Activated CD8-positive, alpha-beta T cell treated with anti-CD3 and anti-CD28 coated beads for 36 hours (primary cell): ENCODE measurements at regions of chr18 and their contacts with region 1.

Region 1: DNA sequence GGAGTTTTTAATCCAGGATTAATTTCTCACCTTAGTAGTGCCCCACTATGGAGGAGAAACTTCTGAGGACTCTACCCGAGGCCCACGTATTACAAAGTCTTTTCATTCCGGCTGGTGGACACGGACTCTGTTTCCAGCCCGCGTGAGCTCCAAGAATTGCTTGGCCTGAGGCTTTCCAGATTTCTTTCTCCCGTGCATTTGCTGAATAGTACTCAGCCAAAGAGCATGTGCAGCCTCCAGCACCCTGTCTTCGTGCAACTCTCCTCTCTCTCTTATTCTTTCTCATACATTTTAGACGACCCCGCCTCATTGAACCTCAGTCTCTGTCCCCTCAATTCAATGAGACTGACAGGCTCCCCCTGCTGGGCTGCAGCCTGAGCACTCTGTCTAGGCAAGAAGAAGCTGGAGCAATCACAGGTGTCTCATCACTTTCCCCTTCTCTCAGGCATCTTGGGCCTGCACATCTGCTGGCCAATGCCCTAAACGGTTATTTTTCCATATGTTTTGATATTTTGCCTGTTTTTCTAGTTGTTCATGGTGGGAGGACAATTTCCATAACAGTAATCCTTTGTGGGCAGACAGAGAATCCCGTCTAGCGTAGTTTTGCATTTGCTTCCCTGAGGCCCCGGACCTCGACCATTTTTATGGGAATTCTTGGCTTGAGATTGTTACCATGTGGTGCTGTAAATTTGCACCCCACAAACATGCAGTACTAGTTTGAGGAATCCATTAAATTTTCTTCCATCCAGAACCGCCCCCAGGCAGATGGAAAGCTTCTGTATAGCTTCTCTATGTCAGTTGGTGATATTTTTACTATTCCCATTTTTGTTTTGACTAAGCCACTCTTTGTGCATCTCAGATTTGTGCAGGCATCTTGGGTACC is 50.1 kb upstream of the LPIN2 start:
- DNase-seq: peak; percentile 88
- ATAC-seq: peak; percentile 32
- H3K4me3 Mint-ChIP-seq: peak overlapping the region; percentile 43
- H3K27ac Mint-ChIP-seq: peak overlapping the region; percentile 100
- H3K4me1 Mint-ChIP-seq: peaks cover 64% of the 10 kb centered on the region
- H3K27me3 Mint-ChIP-seq: no peaks in the 10 kb centered on the region
- CTCF ChIP-seq: peak; percentile 92

Region 2: DNA sequence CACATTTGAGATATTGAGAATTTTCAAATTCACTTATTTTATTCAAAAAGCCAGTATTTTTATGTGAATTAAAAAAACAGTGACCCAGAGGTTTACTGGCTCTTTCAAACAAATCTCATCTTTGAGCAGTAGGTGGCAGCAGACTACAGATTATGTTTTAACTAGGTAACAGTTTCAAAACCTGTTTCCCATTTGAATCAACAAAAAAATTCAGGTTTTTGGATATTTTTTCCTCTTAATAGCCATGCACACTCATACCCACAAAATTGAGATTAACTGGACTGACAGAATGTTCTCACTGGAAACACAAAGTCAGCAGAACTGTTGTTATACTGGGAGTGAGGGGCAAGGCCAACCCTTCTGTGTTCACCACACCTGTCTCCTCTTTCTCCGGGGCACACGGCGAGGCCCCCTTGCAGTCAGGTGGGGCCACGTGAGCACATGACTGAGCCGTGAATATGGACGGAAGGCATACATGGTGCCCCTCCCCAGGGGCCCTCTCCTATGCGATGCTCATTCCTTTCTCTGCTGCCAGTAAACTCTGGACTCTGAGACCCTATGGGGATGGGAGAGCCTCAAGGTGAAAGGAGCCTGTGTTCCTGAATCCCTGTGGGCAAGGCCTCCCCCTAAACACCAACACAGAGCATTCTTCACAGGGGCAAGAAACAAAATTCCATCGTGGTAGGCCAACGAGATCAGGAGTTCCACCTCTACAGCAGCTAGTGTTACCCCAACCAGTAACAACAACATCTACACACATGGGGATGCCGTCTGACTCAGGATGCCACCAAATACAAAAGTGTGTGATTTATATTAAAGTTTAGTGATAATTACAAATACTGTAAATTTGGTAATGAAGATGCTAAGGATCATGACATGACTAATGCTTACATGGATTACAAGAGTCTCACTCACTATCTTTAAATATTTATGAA is 130.5 kb before region 1 on chr18:
- CTCF ChIA-PET with region 1: interaction called, 24 read pairs
- POLR2A ChIA-PET with region 1: no interaction called
- intact Hi-C with region 1: no loop called
- DNase-seq: peak; percentile 56
- ATAC-seq: peak; percentile 71
- H3K4me3 Mint-ChIP-seq: no peak overlapping the region
- H3K27ac Mint-ChIP-seq: peak overlapping the region; percentile 79
- H3K4me1 Mint-ChIP-seq: peaks cover 43% of the 10 kb centered on the region
- H3K27me3 Mint-ChIP-seq: no peaks in the 10 kb centered on the region
- CTCF ChIP-seq: peak; percentile 88

Region 3: DNA sequence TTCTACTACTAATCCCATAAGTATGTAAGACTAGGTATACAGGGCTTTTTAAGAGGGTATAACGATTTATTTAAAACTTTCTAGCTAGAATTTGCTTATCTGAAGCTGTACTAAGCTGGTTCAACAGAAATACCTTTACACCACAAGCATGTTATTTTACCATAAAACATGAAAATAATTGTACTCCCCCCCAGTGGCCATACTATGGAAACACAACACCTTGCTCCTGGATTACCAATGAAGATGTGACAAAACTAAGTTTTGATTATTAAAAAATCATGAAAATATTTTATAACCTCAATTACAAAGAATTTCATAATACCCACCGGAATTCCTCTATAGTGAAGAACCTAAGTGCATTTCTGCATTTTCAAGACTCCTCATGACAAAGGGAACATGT is 77.4 kb before region 1 on chr18:
- CTCF ChIA-PET with region 1: interaction called, 66 read pairs
- POLR2A ChIA-PET with region 1: interaction called, 7 read pairs
- intact Hi-C with region 1: loop called (anchors 5 kb)
- DNase-seq: peak; percentile 32
- ATAC-seq: peak; percentile 53
- H3K4me3 Mint-ChIP-seq: no peak overlapping the region
- H3K27ac Mint-ChIP-seq: peak overlapping the region; percentile 34
- H3K4me1 Mint-ChIP-seq: peaks cover 72% of the 10 kb centered on the region
- H3K27me3 Mint-ChIP-seq: no peaks in the 10 kb centered on the region
- CTCF ChIP-seq: peak; percentile 74

Region 4: DNA sequence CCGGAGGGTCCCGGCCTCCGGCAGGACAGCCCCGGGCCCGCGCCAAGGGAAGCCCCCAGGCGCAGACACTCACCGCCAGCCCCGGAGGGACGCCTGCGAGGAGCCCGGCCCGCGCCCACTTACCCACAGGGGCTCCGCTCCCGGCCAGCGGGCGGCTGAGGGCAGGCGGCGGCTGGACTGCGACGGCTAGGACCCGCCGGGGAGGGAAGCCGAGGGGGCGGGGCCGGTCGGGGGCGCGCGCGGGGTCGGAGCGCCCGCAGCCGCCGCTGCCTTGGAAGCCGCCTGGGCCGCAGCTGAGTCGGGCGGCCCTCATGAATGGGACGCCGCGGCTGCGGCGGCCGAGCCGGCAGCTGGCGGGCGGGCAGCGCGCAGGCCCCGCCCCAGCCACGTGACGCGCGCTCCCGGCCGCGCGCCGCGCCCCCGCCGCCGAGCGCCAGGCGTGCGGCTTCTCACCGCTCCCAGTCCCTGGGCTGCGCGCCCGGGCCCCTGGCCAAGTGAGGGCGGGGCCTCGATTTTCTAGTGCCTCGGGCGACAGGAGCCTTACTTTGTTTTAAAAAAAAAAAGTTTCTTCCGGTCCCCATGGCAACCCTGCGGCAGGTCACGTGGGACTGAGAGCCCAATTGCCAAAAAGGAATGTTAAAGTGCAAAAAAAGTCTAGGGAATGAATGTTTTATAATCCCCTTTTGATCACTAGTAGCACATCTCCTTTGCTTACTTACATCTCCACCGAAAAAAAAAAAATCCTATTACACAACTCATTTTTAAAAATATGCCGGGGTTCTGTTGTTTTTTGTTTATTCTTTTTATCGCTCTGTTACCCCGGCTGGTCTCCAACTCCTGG is 49.9 kb before region 1 on chr18 and contains the start of gene LPIN2:
- CTCF ChIA-PET with region 1: interaction called, 15 read pairs
- POLR2A ChIA-PET with region 1: interaction called, 3 read pairs
- intact Hi-C with region 1: loop called (anchors 5 kb)
- DNase-seq: peak; percentile 98
- ATAC-seq: peak; percentile 95
- H3K4me3 Mint-ChIP-seq: peak within 1 kb of the TSS; percentile 99
- H3K27ac Mint-ChIP-seq: peak within 1 kb of the TSS; percentile 97
- H3K4me1 Mint-ChIP-seq: peaks cover 63% of the 10 kb centered on the region
- H3K27me3 Mint-ChIP-seq: no peaks in the 10 kb centered on the region
- CTCF ChIP-seq: no peak
- total RNA-seq, gene LPIN2: 95.5 to 95.7 TPM

Region 5: GRCh38 chr18:3051718-3052410 is 11.2 kb before region 1 on chr18:
- CTCF ChIA-PET with region 1: interaction called, 20 read pairs
- POLR2A ChIA-PET with region 1: interaction called, 3 read pairs
- intact Hi-C with region 1: no loop called
- DNase-seq: no peak
- ATAC-seq: no peak
- H3K4me3 Mint-ChIP-seq: no peak overlapping the region
- H3K27ac Mint-ChIP-seq: no peak overlapping the region
- H3K4me1 Mint-ChIP-seq: peaks cover 29% of the 10 kb centered on the region
- H3K27me3 Mint-ChIP-seq: no peaks in the 10 kb centered on the region
- CTCF ChIP-seq: no peak

Region 6: GRCh38 chr18:3088449-3088848 is 25.4 kb after region 1 on chr18:
- CTCF ChIA-PET with region 1: interaction called, 23 read pairs
- POLR2A ChIA-PET with region 1: no interaction called
- intact Hi-C with region 1: no loop called
- DNase-seq: no peak
- ATAC-seq: peak; percentile 13
- H3K4me3 Mint-ChIP-seq: no peak overlapping the region
- H3K27ac Mint-ChIP-seq: no peak overlapping the region
- H3K4me1 Mint-ChIP-seq: peaks cover 13% of the 10 kb centered on the region
- H3K27me3 Mint-ChIP-seq: no peaks in the 10 kb centered on the region
- CTCF ChIP-seq: no peak

Region 7: GRCh38 chr18:3151399-3152264 is 88.6 kb after region 1 on chr18:
- CTCF ChIA-PET with region 1: interaction called, 14 read pairs
- POLR2A ChIA-PET with region 1: no interaction called
- intact Hi-C with region 1: no loop called
- DNase-seq: no peak
- ATAC-seq: no peak
- H3K4me3 Mint-ChIP-seq: no peak overlapping the region
- H3K27ac Mint-ChIP-seq: no peak overlapping the region
- H3K4me1 Mint-ChIP-seq: peaks cover 2% of the 10 kb centered on the region
- H3K27me3 Mint-ChIP-seq: no peaks in the 10 kb centered on the region
- CTCF ChIP-seq: peak; percentile 82

Region 8: DNA sequence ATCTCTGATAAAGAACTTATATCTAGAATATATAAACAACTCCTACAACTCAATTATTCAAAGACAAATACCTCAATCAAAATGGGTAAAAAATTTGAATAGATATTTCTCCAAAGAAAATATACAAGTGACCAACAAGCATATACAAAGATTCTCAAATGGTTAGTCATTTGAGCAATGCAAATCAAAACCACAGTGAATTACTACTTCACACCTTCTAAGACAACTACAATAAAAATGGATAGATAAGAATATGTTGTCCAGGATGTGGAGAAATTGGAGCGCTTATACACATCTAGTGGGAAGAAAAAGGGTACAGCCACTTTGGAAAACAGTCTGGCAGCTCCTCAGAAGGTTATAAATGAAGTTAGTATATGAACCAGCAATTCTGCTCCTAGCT is 719.9 kb after region 1 on chr18:
- CTCF ChIA-PET with region 1: no interaction called
- POLR2A ChIA-PET with region 1: no interaction called
- intact Hi-C with region 1: no loop called
- DNase-seq: no peak
- ATAC-seq: no peak
- H3K4me3 Mint-ChIP-seq: no peak overlapping the region
- H3K27ac Mint-ChIP-seq: no peak overlapping the region
- H3K4me1 Mint-ChIP-seq: no peaks in the 10 kb centered on the region
- H3K27me3 Mint-ChIP-seq: peaks cover 3% of the 10 kb centered on the region
- CTCF ChIP-seq: no peak